Activated CD4-positive, alpha-beta T cell treated with anti-CD3 and anti-CD28 coated beads, Interleukin-2, amount 10 ng/mL, durations not matched to agents 24 days and 14 days (primary cell): ENCODE measurements at regions of chr10 and their contacts with region 1.

Region 1: DNA sequence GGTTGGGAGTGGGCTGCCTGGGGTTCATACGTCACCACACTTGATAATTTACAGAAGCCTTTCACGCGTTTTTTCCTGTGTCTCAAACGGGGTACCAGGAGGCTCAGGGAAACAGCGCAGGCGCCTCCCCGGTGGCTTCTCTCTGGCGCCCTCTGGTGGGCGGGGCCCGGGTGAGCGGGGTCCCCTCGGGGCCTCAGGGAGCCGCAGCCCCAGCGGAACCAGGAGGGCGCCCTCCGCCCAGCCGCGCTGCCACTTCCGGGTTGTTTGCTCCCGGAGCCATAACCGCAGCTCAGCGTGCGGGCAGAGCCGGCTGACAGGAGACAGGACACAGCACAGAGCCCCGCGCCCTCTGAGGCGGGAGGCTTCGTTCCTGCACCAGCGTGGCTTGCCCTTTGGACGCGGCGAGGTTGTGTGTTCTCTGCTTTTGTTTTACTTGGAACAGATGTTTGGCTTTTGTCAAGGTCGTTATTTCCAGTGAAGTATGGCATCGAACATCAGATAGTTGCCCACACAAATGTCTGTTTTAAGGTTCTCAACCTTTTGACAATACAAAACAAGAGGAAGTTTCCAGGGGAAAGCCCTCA is 6.9 kb upstream of the CYP2E1 start:
- DNase-seq: peak; percentile 96
- H3K4me3 Mint-ChIP-seq: peak overlapping the region; percentile 55
- H3K27ac Mint-ChIP-seq: no peak overlapping the region
- H3K4me1 Mint-ChIP-seq: peaks cover 4% of the 10 kb centered on the region
- H3K27me3 Mint-ChIP-seq: peaks cover 24% of the 10 kb centered on the region

Region 2: DNA sequence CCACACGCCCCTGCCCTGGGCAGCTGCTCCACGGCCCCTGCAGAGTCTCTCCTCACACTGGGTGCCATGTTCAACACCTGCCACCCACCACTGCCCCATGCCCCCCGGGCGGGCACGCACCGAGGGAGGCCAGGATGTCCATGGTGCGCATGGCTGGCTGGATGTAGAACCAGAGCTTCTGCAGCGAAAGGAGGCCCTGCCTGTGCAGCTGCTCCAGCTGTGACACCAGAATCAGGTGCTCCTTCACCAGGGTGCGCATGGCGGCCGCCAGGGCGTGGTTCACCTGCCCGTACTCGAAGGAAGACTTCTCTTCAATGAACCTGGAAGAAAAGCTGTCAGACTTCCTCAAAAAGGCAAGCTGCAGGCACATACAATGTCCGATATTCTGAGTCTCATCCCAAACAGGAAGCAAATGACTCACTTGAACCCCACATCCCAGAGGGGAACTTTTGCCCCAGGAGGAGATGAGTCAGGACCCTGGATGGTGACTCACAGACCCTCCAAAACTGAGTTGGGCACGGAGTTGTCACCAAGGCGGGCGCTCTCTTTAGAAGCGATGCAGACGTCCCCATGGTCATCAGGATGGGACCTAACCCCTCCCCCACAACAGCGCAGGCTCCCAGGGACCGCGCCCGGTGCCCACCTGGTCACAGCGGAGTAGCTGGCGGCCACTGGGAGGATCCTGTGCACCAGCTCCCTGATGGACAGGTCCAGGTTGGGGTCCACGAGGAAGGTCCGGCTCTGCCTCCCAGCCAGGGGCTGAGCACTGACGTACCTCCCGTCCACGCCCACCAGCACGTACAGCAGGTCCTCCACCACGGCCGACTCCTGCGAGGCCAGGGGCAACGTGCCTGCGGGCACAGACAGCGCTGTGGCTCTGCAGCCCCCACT is 227.1 kb before region 1 on chr10:
- intact Hi-C with region 1: no loop called
- DNase-seq: no peak
- H3K4me3 Mint-ChIP-seq: no peak overlapping the region
- H3K27ac Mint-ChIP-seq: no peak overlapping the region
- H3K4me1 Mint-ChIP-seq: no peaks in the 10 kb centered on the region
- H3K27me3 Mint-ChIP-seq: no peaks in the 10 kb centered on the region

Region 3: DNA sequence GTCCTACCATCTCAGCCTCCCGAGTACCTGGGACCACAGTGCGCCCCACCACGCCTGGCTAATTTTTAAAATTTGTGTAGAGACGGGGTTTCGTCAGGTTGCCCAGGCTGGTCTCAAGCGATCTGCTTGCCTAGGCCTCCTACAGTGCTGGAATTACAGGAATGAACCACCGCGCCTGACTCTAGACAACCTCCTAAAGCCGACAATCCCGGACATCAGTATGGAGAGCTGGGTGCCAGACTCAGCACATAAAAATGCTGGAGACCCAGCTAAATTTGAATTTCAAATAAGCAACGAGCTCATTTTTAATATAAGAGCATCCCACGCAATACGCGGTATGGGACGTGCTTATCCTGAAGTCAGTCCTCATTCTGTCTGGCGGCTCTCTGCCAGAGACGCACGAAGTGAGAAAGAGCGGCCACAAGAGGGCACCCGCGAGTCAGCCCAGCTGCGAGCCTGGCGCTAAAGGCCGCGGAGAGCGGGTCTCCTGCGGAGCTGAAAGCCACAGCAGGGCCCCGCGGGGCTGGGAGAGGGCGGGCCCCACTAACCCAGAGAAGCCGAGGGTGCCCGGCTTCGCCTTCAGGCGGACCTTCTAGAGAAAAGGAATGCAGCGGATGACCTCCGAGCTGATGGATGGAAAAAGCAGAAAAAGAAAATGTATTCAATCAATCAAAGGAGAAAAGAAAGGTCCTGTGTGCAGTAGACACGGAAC is 190.6 kb before region 1 on chr10:
- intact Hi-C with region 1: loop called (anchors 2 kb)
- DNase-seq: peak; percentile 96
- H3K4me3 Mint-ChIP-seq: peak overlapping the region; percentile 64
- H3K27ac Mint-ChIP-seq: no peak overlapping the region
- H3K4me1 Mint-ChIP-seq: peaks cover 9% of the 10 kb centered on the region
- H3K27me3 Mint-ChIP-seq: peaks cover 66% of the 10 kb centered on the region

Region 4: DNA sequence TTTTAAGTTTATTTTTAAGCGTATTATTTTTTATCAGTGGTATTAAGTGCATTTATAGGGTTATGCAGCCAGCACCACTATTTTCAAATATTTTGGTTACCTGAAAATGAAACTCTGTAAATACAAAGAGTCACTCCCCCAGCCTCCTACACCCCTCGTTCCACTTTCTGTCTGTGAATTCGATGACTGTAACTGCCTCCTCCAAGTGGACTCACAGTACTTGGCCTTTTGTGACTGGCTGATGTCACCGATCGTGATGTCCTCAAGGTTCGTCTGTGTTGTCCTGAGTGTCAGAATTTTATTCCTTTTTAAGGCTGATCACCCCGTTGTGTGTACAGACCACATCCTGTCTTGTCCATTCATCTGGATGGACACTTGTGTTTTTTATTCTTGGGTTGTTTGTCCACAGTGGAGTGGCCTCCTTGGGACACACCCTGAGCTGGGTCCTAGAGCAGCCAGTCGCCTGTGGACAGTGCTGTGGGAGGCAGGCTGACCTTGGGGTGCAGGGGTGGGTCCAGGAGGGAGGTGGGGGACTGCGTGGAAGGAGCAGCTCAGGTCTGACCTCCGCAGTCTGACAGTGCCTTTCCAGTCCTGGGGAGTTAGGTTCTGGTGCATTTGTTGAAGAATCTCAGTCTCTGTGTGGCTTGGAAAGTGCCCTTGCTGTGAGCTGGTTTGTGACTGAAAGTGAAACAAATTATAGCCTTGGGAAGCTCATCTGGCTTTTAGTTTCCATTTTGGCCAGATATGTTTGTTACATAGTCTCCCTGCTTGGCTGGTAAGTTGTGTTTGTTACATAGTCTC is 119.4 kb before region 1 on chr10:
- intact Hi-C with region 1: no loop called
- DNase-seq: peak; percentile 78
- H3K4me3 Mint-ChIP-seq: peak overlapping the region; percentile 65
- H3K27ac Mint-ChIP-seq: peak overlapping the region; percentile 68
- H3K4me1 Mint-ChIP-seq: peaks cover 31% of the 10 kb centered on the region
- H3K27me3 Mint-ChIP-seq: no peaks in the 10 kb centered on the region

Region 5: DNA sequence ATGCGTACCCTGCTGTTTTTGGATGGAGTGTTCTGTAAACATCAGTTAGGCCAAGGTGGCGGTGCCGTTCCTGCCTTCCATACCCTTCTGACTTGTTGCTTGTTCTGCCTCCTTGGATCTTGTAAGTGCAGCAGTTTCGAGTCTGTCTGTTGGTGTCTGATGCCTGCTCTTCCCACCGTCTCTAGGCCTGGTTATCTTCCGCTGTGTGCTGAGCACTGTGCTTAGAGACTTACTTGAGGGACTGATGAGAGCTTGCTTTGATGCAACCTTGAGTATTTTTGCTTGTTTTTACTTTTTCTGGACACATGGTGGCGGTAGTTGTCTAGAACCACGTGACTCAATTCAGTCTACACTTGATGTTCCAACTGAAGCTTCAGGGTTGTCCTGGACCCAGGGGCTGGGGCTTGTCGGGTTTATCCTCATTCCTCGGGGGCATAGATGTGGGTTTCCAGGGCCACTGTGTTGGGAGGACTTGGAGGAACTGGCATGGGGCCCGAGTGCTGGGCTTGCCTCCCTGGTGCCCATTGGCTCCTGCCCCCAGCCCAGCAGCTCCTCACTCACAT is 81.5 kb before region 1 on chr10:
- intact Hi-C with region 1: loop called (anchors 2 kb)
- DNase-seq: peak; percentile 76
- H3K4me3 Mint-ChIP-seq: no peak overlapping the region
- H3K27ac Mint-ChIP-seq: no peak overlapping the region
- H3K4me1 Mint-ChIP-seq: peaks cover 14% of the 10 kb centered on the region
- H3K27me3 Mint-ChIP-seq: peaks cover 9% of the 10 kb centered on the region

Region 6: GRCh38 chr10:133537551-133538545 is 17.6 kb after region 1 on chr10:
- intact Hi-C with region 1: no loop called
- DNase-seq: no peak
- H3K4me3 Mint-ChIP-seq: no peak overlapping the region
- H3K27ac Mint-ChIP-seq: no peak overlapping the region
- H3K4me1 Mint-ChIP-seq: no peaks in the 10 kb centered on the region
- H3K27me3 Mint-ChIP-seq: no peaks in the 10 kb centered on the region